ENCODE measurements at regions of chr2 and their contacts with region 1.

Region 1: DNA sequence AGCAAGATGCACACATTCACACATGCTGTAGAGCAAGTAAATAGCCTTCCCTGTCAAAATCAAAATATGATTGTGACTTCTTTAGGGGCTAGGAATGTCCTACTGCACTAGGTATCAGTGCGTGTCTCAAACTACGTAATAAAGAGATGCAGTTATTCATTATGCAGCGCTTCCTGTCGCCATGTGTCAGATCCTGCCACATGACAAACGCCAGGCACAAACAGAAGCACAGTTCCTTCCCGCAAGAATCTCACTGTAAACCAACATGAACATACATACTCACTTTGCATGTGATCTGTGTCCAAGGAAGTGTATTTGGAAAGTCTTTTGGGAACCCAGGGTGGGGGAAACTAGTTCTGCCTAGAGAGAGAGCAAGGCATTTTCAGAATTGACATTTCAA is 599.9 kb downstream of the RNF144A start:
- DNase-seq: peak in 7 of 14 experiments; percentile 2 to 65 (median 40)
- ATAC-seq: peak; percentile 93
- H3K4me3 ChIP-seq: no peak overlapping the region
- H3K4me3 Mint-ChIP-seq: peak overlapping the region; percentile 72
- H3K27ac ChIP-seq: no peak overlapping the region
- H3K27ac Mint-ChIP-seq: peak overlapping the region; percentile 88
- H3K4me1 ChIP-seq: peaks cover 3% of the 10 kb centered on the region
- H3K4me1 Mint-ChIP-seq: peaks cover 34% of the 10 kb centered on the region
- H3K27me3 ChIP-seq: no peaks in the 10 kb centered on the region
- H3K27me3 Mint-ChIP-seq: no peaks in the 10 kb centered on the region
- CTCF ChIP-seq: no peak

Region 2: DNA sequence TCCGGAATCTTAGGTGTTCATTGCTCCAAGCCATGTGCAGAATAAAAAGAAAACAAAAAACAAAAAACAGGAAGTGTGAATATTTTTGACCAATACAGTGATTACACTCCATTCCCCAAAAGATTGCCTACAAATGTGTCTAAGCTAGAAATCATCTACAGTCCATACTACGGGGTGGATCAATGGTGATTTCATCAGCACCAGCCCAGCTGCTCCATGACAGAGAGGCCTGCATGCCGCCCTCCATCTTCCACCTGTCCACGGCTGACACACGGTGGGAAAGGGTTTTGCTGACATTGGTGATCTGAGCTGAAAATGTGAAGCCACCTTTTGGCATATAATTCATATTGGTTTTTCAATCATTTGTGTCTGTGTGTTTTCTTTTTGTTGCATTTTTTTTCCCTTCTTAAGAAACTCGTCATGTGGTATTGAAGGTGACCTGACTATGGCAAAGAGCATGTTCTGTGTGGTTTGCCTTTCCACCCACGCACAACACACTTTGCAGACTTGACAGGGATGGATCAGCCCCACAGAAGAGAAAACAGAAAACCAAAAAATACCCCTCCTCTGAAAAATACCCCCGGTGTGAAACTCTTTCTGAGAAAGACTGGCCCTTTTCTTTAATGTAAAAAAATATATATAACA is 66.8 kb before region 1 on chr2:
- CTCF ChIA-PET with region 1: no interaction called
- POLR2A ChIA-PET with region 1: no interaction called
- intact Hi-C with region 1: loop called in 1 of 2 experiments (anchors 10 kb)
- DNase-seq: peak in 7 of 14 experiments; percentile 23 to 76 (median 54)
- ATAC-seq: peak; percentile 81
- H3K4me3 ChIP-seq: no peak overlapping the region
- H3K4me3 Mint-ChIP-seq: peak overlapping the region; percentile 81
- H3K27ac ChIP-seq: peak overlapping the region; percentile 44 to 68
- H3K27ac Mint-ChIP-seq: peak overlapping the region; percentile 89
- H3K4me1 ChIP-seq: peaks cover 54% of the 10 kb centered on the region
- H3K4me1 Mint-ChIP-seq: peaks cover 73% of the 10 kb centered on the region
- H3K27me3 ChIP-seq: no peaks in the 10 kb centered on the region
- H3K27me3 Mint-ChIP-seq: no peaks in the 10 kb centered on the region
- CTCF ChIP-seq: no peak